ENCODE measurements at regions of chr11 and their contacts with region 1.

Region 1: GRCh38 chr11:108973402-108974162 is 308.7 kb downstream of the DDX10 start:
- DNase-seq: no peak
- ATAC-seq: no peak

Region 2: GRCh38 chr11:109155291-109155690 is 181.7 kb after region 1 on chr11:
- intact Hi-C with region 1: no loop called
- DNase-seq: no peak
- ATAC-seq: no peak

Region 3: DNA sequence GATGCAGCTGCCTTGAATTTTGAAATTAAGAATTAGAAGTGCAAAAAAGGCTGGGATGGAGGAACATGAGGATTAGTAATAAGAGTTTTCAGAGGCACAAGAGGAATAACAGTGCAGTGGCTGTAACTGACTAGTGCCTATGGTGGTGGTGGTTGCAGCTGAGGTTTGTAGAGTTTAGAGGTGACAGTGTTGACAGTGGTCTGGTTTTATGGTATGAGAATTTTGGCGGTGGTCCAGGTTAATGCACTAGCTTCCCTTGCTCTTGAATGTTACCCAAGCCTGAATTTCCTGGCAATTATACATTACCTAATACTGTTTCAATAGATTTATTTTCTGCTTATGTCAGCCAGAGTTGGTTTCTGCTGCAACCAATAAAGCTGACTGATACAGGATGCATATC is 335.6 kb after region 1 on chr11:
- intact Hi-C with region 1: loop called (anchors 10 kb)
- DNase-seq: no peak
- ATAC-seq: no peak

Measured in Right ventricle myocardium superior (tissue), 1 donor.